ENCODE measurements at regions of chr13 and their contacts with region 1.

Region 1: DNA sequence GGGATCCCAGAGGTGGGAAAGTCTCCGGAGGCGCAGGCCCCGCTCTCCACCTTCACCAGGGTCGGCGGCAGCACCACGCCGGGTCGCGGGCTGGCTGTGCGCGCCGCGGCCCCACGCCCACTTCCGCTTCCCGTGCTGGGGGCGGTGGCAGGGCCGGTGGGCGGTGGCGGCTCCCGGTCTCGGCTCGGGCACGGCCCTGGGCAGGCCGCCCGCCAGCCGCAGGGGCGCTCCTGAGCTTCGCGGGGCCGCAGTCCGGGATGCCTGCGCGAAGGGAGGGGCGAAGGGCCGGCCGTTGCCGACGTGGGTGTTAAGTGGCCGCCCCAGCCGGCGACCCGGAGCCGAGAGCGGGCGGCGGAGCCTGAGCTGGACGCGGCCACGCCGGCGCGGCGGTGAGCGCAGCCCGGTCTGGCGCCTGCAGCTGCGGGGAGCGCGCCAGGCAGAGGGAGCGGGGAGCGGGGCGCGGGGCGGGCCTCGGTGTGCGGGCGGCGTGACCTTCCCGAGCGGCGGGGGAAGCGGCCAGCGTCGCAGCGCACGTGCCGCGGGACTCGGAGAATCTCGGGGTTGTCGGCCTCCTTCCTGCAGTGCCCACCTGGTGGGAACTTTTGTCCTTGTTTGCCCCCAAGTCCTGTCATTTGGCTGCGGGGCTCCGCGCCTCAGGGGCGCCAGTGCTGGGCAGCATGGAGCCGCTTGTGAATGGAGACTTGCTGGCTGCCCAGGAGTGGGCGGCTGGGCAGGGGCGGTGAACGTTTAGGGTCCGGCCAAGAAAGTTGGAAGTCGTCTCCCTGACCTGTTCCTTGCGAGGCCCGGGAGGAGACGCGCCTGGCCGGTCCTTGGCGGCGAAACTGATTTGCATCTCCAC is at the start of gene SLC25A15:
- DNase-seq: peak; percentile 72
- H3K4me3 Mint-ChIP-seq: peak within 1 kb of the TSS; percentile 76
- H3K27ac Mint-ChIP-seq: peak within 1 kb of the TSS; percentile 59
- H3K4me1 Mint-ChIP-seq: peaks cover 19% of the 10 kb centered on the region
- H3K27me3 Mint-ChIP-seq: no peaks in the 10 kb centered on the region
- total RNA-seq, gene SLC25A15: 19.0 and 20.0 TPM in 2 replicates

Region 2: DNA sequence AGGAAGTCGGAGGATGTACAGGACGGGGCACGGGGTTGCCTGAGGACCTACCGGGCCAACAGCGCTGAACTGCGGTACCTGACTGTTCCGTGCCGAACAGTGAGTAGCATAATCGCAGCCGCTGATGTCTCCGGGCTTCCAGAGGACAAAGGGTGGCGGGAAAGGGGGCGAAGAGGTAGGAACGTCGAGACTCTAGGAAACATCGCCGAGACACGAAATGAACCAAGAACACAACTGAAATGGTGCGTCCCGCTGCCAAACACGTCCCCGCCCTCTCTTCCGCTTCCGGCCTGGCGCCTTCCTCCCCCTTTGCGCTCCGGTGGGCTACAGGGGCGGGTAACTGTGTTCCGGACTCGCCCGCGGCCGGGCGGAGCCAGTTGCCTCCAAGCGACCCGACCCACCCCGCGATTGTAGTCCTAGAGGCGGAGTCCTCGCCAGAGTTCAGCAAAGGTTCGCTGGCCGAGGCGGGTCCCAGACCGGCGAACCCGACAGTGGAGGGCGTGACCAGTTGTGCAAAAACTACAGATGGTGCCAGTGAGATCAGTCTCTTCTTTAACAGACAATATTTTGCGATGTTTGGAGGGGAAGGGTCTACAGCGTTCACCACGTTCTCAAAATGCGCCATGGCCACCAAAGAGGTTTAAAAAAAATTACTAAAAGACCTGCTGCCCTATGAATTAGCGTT is 18.4 kb before region 1 on chr13 and contains the start of gene MRPS31:
- intact Hi-C with region 1: loop called (anchors 2 kb)
- DNase-seq: peak; percentile 93
- H3K4me3 Mint-ChIP-seq: peak within 1 kb of the TSS; percentile 99
- H3K27ac Mint-ChIP-seq: peak within 1 kb of the TSS; percentile 98
- H3K4me1 Mint-ChIP-seq: peaks cover 29% of the 10 kb centered on the region
- H3K27me3 Mint-ChIP-seq: no peaks in the 10 kb centered on the region
- total RNA-seq, gene MRPS31: 41.6 and 42.6 TPM in 2 replicates

Region 3: GRCh38 chr13:40777166-40777808 is 12.2 kb before region 1 on chr13:
- intact Hi-C with region 1: loop called (anchors 1 kb)
- DNase-seq: peak; percentile 28
- H3K4me3 Mint-ChIP-seq: peak overlapping the region; percentile 76
- H3K27ac Mint-ChIP-seq: peak overlapping the region; percentile 99
- H3K4me1 Mint-ChIP-seq: peaks cover 33% of the 10 kb centered on the region
- H3K27me3 Mint-ChIP-seq: no peaks in the 10 kb centered on the region